Activated CD4-positive, alpha-beta T cell treated with anti-CD3 and anti-CD28 coated beads, Interleukin-2, amount 10 ng/mL, durations not matched to agents 7 days and 5 days (primary cell): ENCODE measurements at regions of chr12 and their contacts with region 1.

Region 1: GRCh38 chr12:57238854-57239554 is 9.5 kb downstream of the SHMT2 start:
- DNase-seq: peak; percentile 88
- H3K4me3 Mint-ChIP-seq: peak overlapping the region; percentile 79
- H3K27ac Mint-ChIP-seq: peak overlapping the region; percentile 83
- H3K4me1 Mint-ChIP-seq: peaks cover 79% of the 10 kb centered on the region
- H3K27me3 Mint-ChIP-seq: peaks cover 50% of the 10 kb centered on the region

Region 2: DNA sequence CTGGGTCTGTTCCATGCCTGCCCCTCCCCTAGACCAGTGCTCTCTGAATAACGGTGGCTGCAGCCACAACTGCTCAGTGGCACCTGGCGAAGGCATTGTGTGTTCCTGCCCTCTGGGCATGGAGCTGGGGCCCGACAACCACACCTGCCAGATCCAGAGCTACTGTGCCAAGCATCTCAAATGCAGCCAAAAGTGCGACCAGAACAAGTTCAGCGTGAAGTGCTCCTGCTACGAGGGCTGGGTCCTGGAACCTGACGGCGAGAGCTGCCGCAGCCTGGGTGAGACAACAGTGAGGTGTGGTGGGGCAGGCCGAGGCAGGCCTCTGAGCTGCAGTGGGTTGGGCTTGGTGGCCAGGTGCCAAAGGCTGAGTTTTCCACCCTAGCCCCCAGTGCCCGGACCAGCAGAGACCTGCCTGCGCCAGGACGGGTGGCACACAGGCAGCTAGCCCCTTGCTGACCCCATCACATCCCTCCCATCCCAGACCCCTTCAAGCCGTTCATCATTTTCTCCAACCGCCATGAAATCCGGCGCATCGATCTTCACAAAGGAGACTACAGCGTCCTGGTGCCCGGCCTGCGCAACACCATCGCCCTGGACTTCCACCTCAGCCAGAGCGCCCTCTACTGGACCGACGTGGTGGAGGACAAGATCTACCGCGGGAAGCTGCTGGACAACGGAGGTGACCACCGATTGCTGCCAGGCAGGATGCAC is 63.4 kb before region 1 on chr12:
- CTCF ChIA-PET with region 1: no interaction called
- POLR2A ChIA-PET with region 1: no interaction called
- DNase-seq: peak; percentile 45
- H3K4me3 Mint-ChIP-seq: no peak overlapping the region
- H3K27ac Mint-ChIP-seq: no peak overlapping the region
- H3K4me1 Mint-ChIP-seq: no peaks in the 10 kb centered on the region
- H3K27me3 Mint-ChIP-seq: no peaks in the 10 kb centered on the region

Region 3: DNA sequence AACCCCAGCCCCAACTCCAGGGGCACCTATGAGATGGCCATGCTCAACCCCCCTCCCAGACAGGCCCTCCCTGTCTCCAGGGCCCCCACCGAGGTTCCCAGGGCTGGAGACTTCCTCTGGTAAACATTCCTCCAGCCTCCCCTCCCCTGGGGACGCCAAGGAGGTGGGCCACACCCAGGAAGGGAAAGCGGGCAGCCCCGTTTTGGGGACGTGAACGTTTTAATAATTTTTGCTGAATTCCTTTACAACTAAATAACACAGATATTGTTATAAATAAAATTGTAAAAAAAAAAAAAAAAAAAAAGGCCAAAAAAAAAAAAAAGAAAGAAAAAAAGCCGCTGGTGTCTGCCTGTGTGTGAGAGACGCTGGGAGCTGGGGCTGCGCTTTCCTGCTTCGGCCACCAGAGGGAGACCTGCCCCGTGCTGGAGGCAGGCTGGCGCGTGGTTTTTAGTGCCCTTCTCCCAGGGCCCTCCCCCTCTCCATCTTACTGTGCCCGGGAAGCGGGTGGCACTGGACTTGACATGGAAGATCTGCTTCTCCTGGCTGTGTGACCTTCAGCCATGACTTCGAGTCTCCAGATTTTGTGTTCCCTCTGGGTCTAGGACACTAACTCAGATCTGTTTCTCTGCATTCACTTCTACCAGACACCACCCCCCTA is 25.8 kb before region 1 on chr12:
- CTCF ChIA-PET with region 1: interaction called, 142 read pairs
- POLR2A ChIA-PET with region 1: interaction called, 14 read pairs
- DNase-seq: peak; percentile 85
- H3K4me3 Mint-ChIP-seq: no peak overlapping the region
- H3K27ac Mint-ChIP-seq: no peak overlapping the region
- H3K4me1 Mint-ChIP-seq: peaks cover 36% of the 10 kb centered on the region
- H3K27me3 Mint-ChIP-seq: peaks cover 41% of the 10 kb centered on the region

Region 4: GRCh38 chr12:57223191-57224165 is 15.5 kb before region 1 on chr12:
- CTCF ChIA-PET with region 1: interaction called, 332 read pairs
- POLR2A ChIA-PET with region 1: no interaction called
- DNase-seq: no peak
- H3K4me3 Mint-ChIP-seq: no peak overlapping the region
- H3K27ac Mint-ChIP-seq: no peak overlapping the region
- H3K4me1 Mint-ChIP-seq: peaks cover 45% of the 10 kb centered on the region
- H3K27me3 Mint-ChIP-seq: peaks cover 80% of the 10 kb centered on the region

Region 5: GRCh38 chr12:57248934-57249742 is 10.1 kb after region 1 on chr12:
- CTCF ChIA-PET with region 1: interaction called, 332 read pairs
- POLR2A ChIA-PET with region 1: no interaction called
- DNase-seq: no peak
- H3K4me3 Mint-ChIP-seq: peak overlapping the region; percentile 18
- H3K27ac Mint-ChIP-seq: peak overlapping the region; percentile 5
- H3K4me1 Mint-ChIP-seq: peaks cover 9% of the 10 kb centered on the region
- H3K27me3 Mint-ChIP-seq: no peaks in the 10 kb centered on the region

Region 6: DNA sequence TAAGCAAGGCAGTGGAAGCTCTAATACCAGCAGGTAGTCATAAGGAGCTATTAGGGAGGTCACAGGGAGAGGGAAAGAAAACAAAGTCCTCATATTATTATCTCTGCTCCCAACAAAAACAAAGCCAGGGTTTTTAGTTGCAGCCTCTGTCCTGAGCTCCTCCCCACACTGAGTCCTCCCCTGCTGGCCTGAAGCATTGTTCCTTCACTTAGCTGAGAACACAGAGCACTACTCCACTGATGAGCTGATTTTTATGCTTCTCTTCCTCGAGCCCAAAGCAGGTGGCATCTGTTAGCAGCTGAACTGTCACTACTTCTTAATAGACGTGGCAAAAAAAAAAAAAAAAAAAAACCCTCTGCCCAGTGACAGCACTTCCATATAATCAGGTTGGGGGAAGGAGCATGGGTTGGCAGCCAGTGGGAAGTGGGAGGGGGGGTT is 22.4 kb after region 1 on chr12:
- CTCF ChIA-PET with region 1: interaction called, 13 read pairs
- POLR2A ChIA-PET with region 1: no interaction called
- DNase-seq: no peak
- H3K4me3 Mint-ChIP-seq: no peak overlapping the region
- H3K27ac Mint-ChIP-seq: no peak overlapping the region
- H3K4me1 Mint-ChIP-seq: peaks cover 6% of the 10 kb centered on the region
- H3K27me3 Mint-ChIP-seq: no peaks in the 10 kb centered on the region

Region 7: DNA sequence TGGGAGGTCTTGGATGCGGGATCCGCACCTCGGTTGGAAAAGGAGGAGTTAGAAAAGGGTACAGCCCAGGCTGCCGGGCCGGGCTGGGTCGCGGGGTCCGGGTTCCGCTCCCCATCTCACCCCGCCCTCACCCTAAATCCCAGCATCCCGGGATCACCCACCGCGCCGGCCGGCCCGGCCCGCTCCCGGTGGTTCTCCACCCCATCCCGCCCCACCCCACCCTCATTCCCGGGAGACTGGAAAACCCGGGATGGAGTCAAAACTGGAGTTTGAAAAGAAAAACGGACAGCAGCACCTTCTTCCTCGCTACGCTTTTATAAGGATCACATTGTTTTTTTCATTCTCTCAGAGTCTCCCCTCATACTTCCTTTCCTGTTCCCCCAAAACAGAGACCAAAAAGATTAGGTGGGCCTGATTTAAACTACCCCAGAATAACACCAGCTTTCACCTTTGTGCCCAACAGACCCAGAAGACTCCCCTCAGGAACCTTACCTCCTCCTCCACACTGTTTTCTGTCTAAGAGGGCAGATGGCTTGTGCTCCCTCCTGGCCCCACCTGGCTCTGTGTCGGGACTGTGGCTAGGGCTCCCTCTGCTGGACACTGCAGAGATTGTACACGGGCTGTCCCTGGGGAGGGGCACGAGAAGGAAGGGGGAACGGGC is 223.4 kb after region 1 on chr12:
- CTCF ChIA-PET with region 1: interaction called, 15 read pairs
- POLR2A ChIA-PET with region 1: no interaction called
- DNase-seq: peak; percentile 92
- H3K4me3 Mint-ChIP-seq: peak overlapping the region; percentile 76
- H3K27ac Mint-ChIP-seq: peak overlapping the region; percentile 54
- H3K4me1 Mint-ChIP-seq: peaks cover 55% of the 10 kb centered on the region
- H3K27me3 Mint-ChIP-seq: peaks cover 19% of the 10 kb centered on the region